ENCODE measurements at regions of chr4 and their contacts with region 1.

Region 1: DNA sequence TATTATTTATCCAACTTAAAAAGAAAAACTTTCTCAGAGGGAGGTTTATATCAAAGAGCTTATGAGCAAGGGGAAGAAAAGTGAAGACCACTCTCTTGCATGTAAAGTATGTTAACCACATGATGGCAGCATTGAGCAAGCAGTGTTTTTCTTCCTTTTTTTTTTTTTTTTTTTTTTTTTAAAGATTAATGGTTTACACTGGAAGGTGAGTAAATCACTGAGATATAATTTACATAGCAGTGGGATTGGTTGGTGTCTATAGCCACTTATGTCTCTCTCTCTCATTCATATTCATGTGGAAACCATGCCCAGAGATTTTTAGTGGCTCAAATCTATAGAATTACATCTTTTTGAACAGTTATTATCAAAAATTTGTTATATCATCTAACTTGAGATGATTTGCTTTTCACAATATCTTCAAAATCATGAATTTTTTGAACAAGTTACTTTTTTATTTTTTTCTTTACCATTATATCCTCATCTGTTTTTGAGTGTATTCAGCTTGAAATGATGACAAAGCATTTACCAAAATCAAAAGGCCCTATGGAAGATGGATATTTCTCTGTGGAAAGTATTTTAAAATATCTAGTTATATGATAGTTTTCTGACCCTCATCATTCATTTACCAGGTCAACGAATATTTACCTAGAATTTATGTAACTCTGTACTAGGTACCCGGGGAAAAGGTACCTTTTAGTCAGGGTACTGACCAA is 31.6 kb downstream of the MTHFD2L start:
- DNase-seq: peak; percentile 45 to 68 (median 68)
- H3K4me3 ChIP-seq: no peak overlapping the region
- H3K4me3 Mint-ChIP-seq: no peak overlapping the region
- H3K27ac ChIP-seq: no peak overlapping the region
- H3K27ac Mint-ChIP-seq: no peak overlapping the region
- H3K4me1 ChIP-seq: no peaks in the 10 kb centered on the region
- H3K4me1 Mint-ChIP-seq: no peaks in the 10 kb centered on the region
- H3K27me3 ChIP-seq: no peaks in the 10 kb centered on the region
- H3K27me3 Mint-ChIP-seq: no peaks in the 10 kb centered on the region
- CTCF ChIP-seq: peak; percentile 83

Region 2: GRCh38 chr4:74152836-74153235 is 36.7 kb before region 1 on chr4:
- intact Hi-C with region 1: no loop called
- DNase-seq: no peak
- H3K4me3 ChIP-seq: no peak overlapping the region
- H3K4me3 Mint-ChIP-seq: no peak overlapping the region
- H3K27ac ChIP-seq: no peak overlapping the region
- H3K27ac Mint-ChIP-seq: no peak overlapping the region
- H3K4me1 ChIP-seq: peaks cover 5 to 7% of the 10 kb centered on the region in 2 donors
- H3K4me1 Mint-ChIP-seq: peaks cover 5% of the 10 kb centered on the region
- H3K27me3 ChIP-seq: no peaks in the 10 kb centered on the region
- H3K27me3 Mint-ChIP-seq: peaks cover 0 to 1% (median 0%) of the 10 kb centered on the region in 3 donors
- CTCF ChIP-seq: no peak

Region 3: GRCh38 chr4:74311696-74312313 is 122.3 kb after region 1 on chr4:
- intact Hi-C with region 1: loop called (anchors 5 to 10 kb)
- DNase-seq: peak; percentile 25 to 70 (median 59)
- H3K4me3 ChIP-seq: no peak overlapping the region
- H3K4me3 Mint-ChIP-seq: no peak overlapping the region
- H3K27ac ChIP-seq: no peak overlapping the region
- H3K27ac Mint-ChIP-seq: no peak overlapping the region
- H3K4me1 ChIP-seq: peaks cover 4 to 5% of the 10 kb centered on the region in 2 donors
- H3K4me1 Mint-ChIP-seq: peaks cover 15% of the 10 kb centered on the region
- H3K27me3 ChIP-seq: no peaks in the 10 kb centered on the region
- H3K27me3 Mint-ChIP-seq: no peaks in the 10 kb centered on the region
- CTCF ChIP-seq: peak; percentile 77

Region 4: GRCh38 chr4:75126058-75126457 is 936.6 kb after region 1 on chr4:
- intact Hi-C with region 1: no loop called
- DNase-seq: no peak
- H3K4me3 ChIP-seq: no peak overlapping the region
- H3K4me3 Mint-ChIP-seq: no peak overlapping the region
- H3K27ac ChIP-seq: no peak overlapping the region
- H3K27ac Mint-ChIP-seq: no peak overlapping the region
- H3K4me1 ChIP-seq: no peaks in the 10 kb centered on the region
- H3K4me1 Mint-ChIP-seq: no peaks in the 10 kb centered on the region
- H3K27me3 ChIP-seq: no peaks in the 10 kb centered on the region
- H3K27me3 Mint-ChIP-seq: peaks cover 0 to 2% (median 0%) of the 10 kb centered on the region in 3 donors
- CTCF ChIP-seq: no peak

Region 5: DNA sequence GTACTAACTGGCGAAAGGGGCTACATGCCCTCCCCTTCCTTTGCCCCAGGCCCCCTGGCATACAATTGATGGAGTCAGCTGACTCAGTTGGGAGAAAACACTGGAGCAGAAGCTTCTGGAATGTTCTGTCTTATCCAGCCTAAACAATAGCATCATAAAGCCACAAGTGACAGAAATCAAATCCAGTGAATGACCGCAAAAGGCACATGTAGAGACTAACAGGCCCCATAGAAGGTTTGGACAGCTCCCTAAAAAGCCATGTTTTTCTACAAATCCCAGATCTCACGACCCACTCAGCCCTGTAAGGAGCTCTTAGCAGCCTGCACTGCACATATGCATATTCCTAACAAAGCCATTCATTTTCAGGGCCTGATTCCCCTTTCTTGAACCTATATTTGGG is 1999.1 kb after region 1 on chr4:
- intact Hi-C with region 1: no loop called
- DNase-seq: no peak
- H3K4me3 ChIP-seq: no peak overlapping the region
- H3K4me3 Mint-ChIP-seq: no peak overlapping the region
- H3K27ac ChIP-seq: no peak overlapping the region
- H3K27ac Mint-ChIP-seq: peak overlapping the region in 1 of 7 donors; percentile 18
- H3K4me1 ChIP-seq: peaks cover 7 to 11% of the 10 kb centered on the region in 2 donors
- H3K4me1 Mint-ChIP-seq: peaks cover 12% of the 10 kb centered on the region
- H3K27me3 ChIP-seq: no peaks in the 10 kb centered on the region
- H3K27me3 Mint-ChIP-seq: no peaks in the 10 kb centered on the region
- CTCF ChIP-seq: no peak